ENCODE measurements at regions of chr1 and their contacts with region 1.

Region 1: GRCh38 chr1:111582644-111583618 is 36.7 kb upstream of the RAP1A start:
- DNase-seq: no peak
- H3K4me3 Mint-ChIP-seq: no peak overlapping the region
- H3K27ac Mint-ChIP-seq: no peak overlapping the region
- H3K4me1 Mint-ChIP-seq: peaks cover 3% of the 10 kb centered on the region
- H3K27me3 Mint-ChIP-seq: no peaks in the 10 kb centered on the region

Region 2: GRCh38 chr1:111553196-111553595 is 29.7 kb before region 1 on chr1:
- CTCF ChIA-PET with region 1: no interaction called
- DNase-seq: no peak
- H3K4me3 Mint-ChIP-seq: no peak overlapping the region
- H3K27ac Mint-ChIP-seq: no peak overlapping the region
- H3K4me1 Mint-ChIP-seq: no peaks in the 10 kb centered on the region
- H3K27me3 Mint-ChIP-seq: peaks cover 8% of the 10 kb centered on the region

Region 3: GRCh38 chr1:111570781-111571181 is 12.2 kb before region 1 on chr1:
- CTCF ChIA-PET with region 1: interaction called, 12 read pairs
- DNase-seq: peak; percentile 46
- H3K4me3 Mint-ChIP-seq: no peak overlapping the region
- H3K27ac Mint-ChIP-seq: no peak overlapping the region
- H3K4me1 Mint-ChIP-seq: no peaks in the 10 kb centered on the region
- H3K27me3 Mint-ChIP-seq: peaks cover 7% of the 10 kb centered on the region

Measured in activated naive CD4-positive, alpha-beta T cell treated with anti-CD3 and anti-CD28 coated beads, Interleukin-2, amount 10 ng/mL, durations not matched to agents 7 days and 5 days (primary cell).